HCT116 (cell line): ENCODE measurements at regions of chr9 and their contacts with region 1.

Region 1: DNA sequence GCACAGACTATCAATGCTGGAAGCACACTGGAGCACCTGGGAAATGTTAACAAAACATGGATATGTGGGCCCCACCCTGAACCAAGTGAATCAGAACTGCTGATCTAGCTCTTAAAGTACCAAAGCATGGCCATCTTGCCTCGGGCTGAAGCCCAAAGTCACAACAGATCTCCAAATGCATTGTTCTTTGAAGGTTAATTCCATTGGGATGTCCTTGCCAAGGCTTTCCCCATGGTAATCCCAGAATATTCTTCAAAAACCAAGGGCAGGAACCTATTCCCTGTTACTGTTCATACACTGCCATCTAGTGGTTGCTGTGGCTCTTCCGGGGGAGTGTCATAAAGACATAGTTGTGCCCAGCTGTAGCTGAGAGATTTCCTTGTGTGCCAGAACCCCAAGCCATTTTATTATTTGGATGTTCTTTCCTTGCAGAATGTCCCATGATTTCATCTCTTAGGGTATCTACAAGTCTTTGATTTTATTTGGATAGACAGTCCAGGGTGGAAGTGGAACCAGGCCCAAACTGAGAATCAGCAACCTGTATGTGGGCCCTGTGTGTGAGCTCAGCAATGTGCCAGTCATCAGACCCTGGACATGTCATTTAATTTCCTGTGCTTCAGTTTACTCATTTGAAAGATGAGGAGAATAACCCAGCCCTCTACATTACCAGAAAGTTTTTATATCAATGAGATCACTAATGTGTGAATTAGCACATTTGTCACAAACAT is 290.0 kb downstream of the ACTL7B start:
- DNase-seq: peak; percentile 72
- ATAC-seq: peak; percentile 93
- H3K4me3 ChIP-seq: no peak overlapping the region
- H3K27ac ChIP-seq: no peak overlapping the region
- H3K4me1 ChIP-seq: peaks cover 0 to 7% of the 10 kb centered on the region in 2 experiments; a peak in 1 of 4 replicates
- H3K27me3 ChIP-seq: peaks cover 4% of the 10 kb centered on the region; the same call in 1 of the 2 replicates
- CTCF ChIP-seq: peak; percentile 87 to 94 (median 87)
- POLR2A ChIP-seq: no peak
- RAD21 ChIP-seq: peak; percentile 99

Region 2: DNA sequence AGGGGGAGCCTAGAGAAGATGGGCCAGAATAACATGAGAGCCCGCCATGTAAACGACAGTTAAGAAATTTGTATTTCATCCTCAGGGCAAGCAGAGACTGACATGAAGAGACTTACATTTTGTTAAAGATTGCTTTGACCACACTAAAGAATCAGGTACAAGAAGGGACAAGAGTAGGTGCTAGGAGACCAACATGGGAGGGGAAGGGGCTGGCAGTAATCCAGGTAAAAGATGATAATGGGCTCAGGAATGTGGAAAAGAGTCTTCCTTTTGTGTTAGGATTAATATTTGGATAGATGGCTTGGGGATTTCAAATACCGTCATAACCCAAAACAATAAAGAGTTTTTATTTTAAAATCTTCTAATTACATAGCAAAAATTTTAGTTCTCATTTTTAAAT is 1565.6 kb before region 1 on chr9:
- CTCF ChIA-PET with region 1: no interaction called
- POLR2A ChIA-PET with region 1: no interaction called
- RAD21 ChIA-PET with region 1: no interaction called
- intact Hi-C with region 1: no loop called
- DNase-seq: no peak
- ATAC-seq: no peak
- H3K4me3 ChIP-seq: no peak overlapping the region
- H3K27ac ChIP-seq: no peak overlapping the region
- H3K4me1 ChIP-seq: no peaks in the 10 kb centered on the region
- H3K27me3 ChIP-seq: no peaks in the 10 kb centered on the region
- CTCF ChIP-seq: no peak
- POLR2A ChIP-seq: no peak
- RAD21 ChIP-seq: no peak

Region 3: GRCh38 chr9:107465467-107466451 is 1100.1 kb before region 1 on chr9:
- CTCF ChIA-PET with region 1: interaction called, 7 read pairs
- POLR2A ChIA-PET with region 1: no interaction called
- RAD21 ChIA-PET with region 1: no interaction called
- intact Hi-C with region 1: loop called (anchors 5 kb)
- DNase-seq: no peak
- ATAC-seq: peak; percentile 97
- H3K4me3 ChIP-seq: peak overlapping the region; percentile 8 to 42
- H3K27ac ChIP-seq: no peak overlapping the region
- H3K4me1 ChIP-seq: peaks cover 0 to 13% of the 10 kb centered on the region in 2 experiments; a peak in 3 of 4 replicates
- H3K27me3 ChIP-seq: no peaks in the 10 kb centered on the region
- CTCF ChIP-seq: peak; percentile 57 to 78 (median 75)
- POLR2A ChIP-seq: no peak
- RAD21 ChIP-seq: peak; percentile 89

Region 4: GRCh38 chr9:108002371-108002956 is 563.4 kb before region 1 on chr9:
- CTCF ChIA-PET with region 1: no interaction called
- POLR2A ChIA-PET with region 1: no interaction called
- RAD21 ChIA-PET with region 1: no interaction called
- intact Hi-C with region 1: loop called (anchors 5 kb)
- DNase-seq: peak; percentile 4
- ATAC-seq: no peak
- H3K4me3 ChIP-seq: peak overlapping the region in 1 of 2 experiments; percentile 8; a peak in 2 of 4 replicates
- H3K27ac ChIP-seq: peak overlapping the region; percentile 82
- H3K4me1 ChIP-seq: peaks cover 41 to 63% of the 10 kb centered on the region in 2 experiments
- H3K27me3 ChIP-seq: no peaks in the 10 kb centered on the region
- CTCF ChIP-seq: no peak
- POLR2A ChIP-seq: no peak
- RAD21 ChIP-seq: no peak

Region 5: GRCh38 chr9:108272349-108272899 is 293.4 kb before region 1 on chr9:
- CTCF ChIA-PET with region 1: interaction called, 16 read pairs
- POLR2A ChIA-PET with region 1: no interaction called
- RAD21 ChIA-PET with region 1: no interaction called
- intact Hi-C with region 1: no loop called
- DNase-seq: peak; percentile 38
- ATAC-seq: peak; percentile 84
- H3K4me3 ChIP-seq: no peak overlapping the region
- H3K27ac ChIP-seq: no peak overlapping the region
- H3K4me1 ChIP-seq: peaks cover 19 to 41% of the 10 kb centered on the region in 2 experiments; a peak in 3 of 4 replicates
- H3K27me3 ChIP-seq: no peaks in the 10 kb centered on the region
- CTCF ChIP-seq: peak; percentile 65 to 66 (median 66)
- POLR2A ChIP-seq: no peak
- RAD21 ChIP-seq: peak; percentile 94

Region 6: GRCh38 chr9:108468402-108468801 is 97.4 kb before region 1 on chr9:
- CTCF ChIA-PET with region 1: interaction called, 6 read pairs
- POLR2A ChIA-PET with region 1: no interaction called
- RAD21 ChIA-PET with region 1: no interaction called
- intact Hi-C with region 1: loop called (anchors 1 kb)
- DNase-seq: peak; percentile 54
- ATAC-seq: peak; percentile 93
- H3K4me3 ChIP-seq: no peak overlapping the region
- H3K27ac ChIP-seq: no peak overlapping the region
- H3K4me1 ChIP-seq: peaks cover 3 to 33% of the 10 kb centered on the region in 2 experiments; a peak in 3 of 4 replicates
- H3K27me3 ChIP-seq: no peaks in the 10 kb centered on the region
- CTCF ChIP-seq: peak; percentile 17 to 80 (median 75); a peak in 4 of 6 replicates
- POLR2A ChIP-seq: no peak
- RAD21 ChIP-seq: peak; percentile 57

Region 7: DNA sequence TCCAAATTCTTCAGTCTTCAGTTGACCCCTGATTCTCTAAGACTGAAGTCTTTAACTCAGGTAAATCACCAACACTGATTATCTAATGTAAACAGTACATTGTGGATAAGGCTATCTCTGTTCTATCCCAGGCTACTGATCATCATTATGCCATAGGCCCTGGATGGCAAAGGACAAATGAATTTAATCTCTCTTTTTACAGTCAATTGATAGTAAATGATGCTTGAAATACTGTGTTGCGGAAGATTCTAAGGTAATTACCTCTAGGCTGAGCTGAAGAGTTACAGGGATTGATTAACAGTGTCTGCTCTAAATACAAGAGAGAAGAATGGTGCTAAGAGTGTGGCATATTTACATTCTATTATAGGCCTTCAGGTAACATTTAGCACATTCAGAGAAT is 25.3 kb after region 1 on chr9:
- CTCF ChIA-PET with region 1: no interaction called
- POLR2A ChIA-PET with region 1: no interaction called
- RAD21 ChIA-PET with region 1: no interaction called
- intact Hi-C with region 1: no loop called
- DNase-seq: no peak
- ATAC-seq: no peak
- H3K4me3 ChIP-seq: no peak overlapping the region
- H3K27ac ChIP-seq: no peak overlapping the region
- H3K4me1 ChIP-seq: no peaks in the 10 kb centered on the region
- H3K27me3 ChIP-seq: peaks cover 27% of the 10 kb centered on the region
- CTCF ChIP-seq: no peak
- POLR2A ChIP-seq: no peak
- RAD21 ChIP-seq: no peak